OCI-LY7 (cell line): ENCODE measurements at regions of chr5 and their contacts with region 1.

Region 1: GRCh38 chr5:35003018-35003957 is 44.5 kb downstream of the AGXT2 start:
- DNase-seq: peak; percentile 65
- H3K4me3 ChIP-seq: no peak overlapping the region
- H3K27ac ChIP-seq: no peak overlapping the region
- H3K4me1 ChIP-seq: no peaks in the 10 kb centered on the region
- CTCF ChIP-seq: peak; percentile 95

Region 2: DNA sequence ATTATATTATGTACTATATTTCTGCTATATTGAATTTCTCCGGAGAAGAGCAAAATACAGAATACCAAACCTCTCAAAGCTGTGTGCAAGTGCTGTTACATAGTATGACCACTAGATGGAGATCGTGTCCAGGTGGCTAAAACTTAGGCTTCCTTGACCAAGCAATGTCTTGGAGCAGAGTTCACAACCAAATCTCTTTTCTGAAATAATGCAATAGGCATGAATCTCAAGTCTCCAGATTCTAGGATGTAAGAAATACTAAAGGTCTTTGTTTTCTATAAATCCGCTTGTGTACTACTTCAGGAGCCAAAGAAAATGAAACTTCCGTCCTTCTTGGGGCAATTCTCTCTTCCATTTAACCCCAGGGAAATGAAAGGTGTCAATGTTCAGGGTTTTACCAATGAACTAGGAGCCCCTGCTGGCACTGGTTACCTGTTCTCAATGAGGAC is 528.7 kb before region 1 on chr5:
- CTCF ChIA-PET with region 1: no interaction called
- POLR2A ChIA-PET with region 1: no interaction called
- intact Hi-C with region 1: loop called (anchors 5 kb)
- DNase-seq: peak; percentile 49
- H3K4me3 ChIP-seq: no peak overlapping the region
- H3K27ac ChIP-seq: no peak overlapping the region
- H3K4me1 ChIP-seq: no peaks in the 10 kb centered on the region
- CTCF ChIP-seq: peak; percentile 97

Region 3: GRCh38 chr5:34486160-34486848 is 517.0 kb before region 1 on chr5:
- CTCF ChIA-PET with region 1: no interaction called
- POLR2A ChIA-PET with region 1: no interaction called
- intact Hi-C with region 1: loop called (anchors 1 kb)
- DNase-seq: peak; percentile 74
- H3K4me3 ChIP-seq: no peak overlapping the region
- H3K27ac ChIP-seq: no peak overlapping the region
- H3K4me1 ChIP-seq: no peaks in the 10 kb centered on the region
- CTCF ChIP-seq: peak; percentile 97

Region 4: DNA sequence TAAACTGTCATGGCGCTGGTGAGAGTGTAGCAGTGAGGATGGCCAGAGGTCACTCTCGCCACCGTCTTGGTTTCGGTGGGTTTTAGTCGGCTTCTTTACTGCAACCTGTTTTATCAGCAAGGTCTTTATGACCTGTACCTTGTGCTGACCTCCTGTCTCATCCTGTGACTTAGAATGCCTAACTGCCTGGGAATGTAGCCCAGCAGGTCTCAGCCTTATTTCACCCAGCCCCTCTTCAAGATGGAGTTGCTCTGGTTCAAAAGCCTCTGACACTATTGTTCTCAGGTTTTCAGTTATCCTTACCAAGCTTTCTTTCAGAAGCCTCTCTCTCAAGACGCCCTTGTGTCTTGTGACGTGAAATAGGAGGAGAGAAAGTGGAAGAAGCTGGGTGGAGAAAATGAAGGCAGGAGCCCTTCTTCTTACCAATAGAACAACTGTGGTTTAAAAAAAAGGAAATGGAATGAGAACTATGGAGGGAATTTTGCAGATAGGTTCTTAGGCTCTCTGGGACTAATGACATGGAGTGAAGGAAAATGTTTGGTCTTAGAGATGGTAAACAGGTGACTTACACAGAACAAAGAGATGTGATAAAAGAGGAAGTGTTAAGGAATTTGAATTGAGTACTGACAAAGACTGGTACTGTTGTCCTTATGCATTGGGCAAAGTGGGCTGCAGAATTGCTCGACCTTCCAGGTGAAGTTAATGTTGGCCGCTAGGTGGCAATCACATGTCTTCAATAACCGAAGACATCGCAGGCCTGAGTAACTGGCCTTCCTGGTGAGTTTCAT is 480.5 kb before region 1 on chr5:
- CTCF ChIA-PET with region 1: no interaction called
- POLR2A ChIA-PET with region 1: interaction called, 3 read pairs
- intact Hi-C with region 1: loop called (anchors 2 kb)
- DNase-seq: peak; percentile 78
- H3K4me3 ChIP-seq: no peak overlapping the region
- H3K27ac ChIP-seq: no peak overlapping the region
- H3K4me1 ChIP-seq: no peaks in the 10 kb centered on the region
- CTCF ChIP-seq: peak; percentile 85

Region 5: DNA sequence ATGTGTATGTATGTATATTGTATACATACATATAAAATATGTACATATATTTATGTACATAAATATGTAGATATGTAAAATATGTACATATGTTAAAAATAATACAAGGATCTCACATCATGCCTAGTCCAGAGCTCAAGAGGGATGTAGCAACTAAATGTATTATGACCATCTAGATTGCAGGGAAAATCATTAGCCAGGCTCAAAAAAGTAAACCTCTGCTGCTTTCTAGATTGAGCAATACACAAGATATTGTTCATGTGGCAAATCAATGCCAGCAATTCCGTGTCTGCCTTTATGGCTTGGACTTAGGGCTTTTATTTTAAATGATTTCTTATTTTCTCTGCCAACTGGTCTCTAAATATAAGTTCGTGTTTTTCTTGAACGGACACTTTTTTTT is 282.0 kb before region 1 on chr5:
- CTCF ChIA-PET with region 1: no interaction called
- POLR2A ChIA-PET with region 1: no interaction called
- intact Hi-C with region 1: no loop called
- DNase-seq: no peak
- H3K4me3 ChIP-seq: no peak overlapping the region
- H3K27ac ChIP-seq: no peak overlapping the region
- H3K4me1 ChIP-seq: no peaks in the 10 kb centered on the region
- CTCF ChIP-seq: no peak

Region 6: GRCh38 chr5:34743878-34744277 is 259.4 kb before region 1 on chr5:
- CTCF ChIA-PET with region 1: no interaction called
- POLR2A ChIA-PET with region 1: no interaction called
- intact Hi-C with region 1: no loop called
- DNase-seq: no peak
- H3K4me3 ChIP-seq: no peak overlapping the region
- H3K27ac ChIP-seq: no peak overlapping the region
- H3K4me1 ChIP-seq: peaks cover 11% of the 10 kb centered on the region
- CTCF ChIP-seq: no peak

Region 7: GRCh38 chr5:35096216-35096615 is 92.9 kb after region 1 on chr5:
- CTCF ChIA-PET with region 1: no interaction called
- POLR2A ChIA-PET with region 1: no interaction called
- intact Hi-C with region 1: no loop called
- DNase-seq: no peak
- H3K4me3 ChIP-seq: no peak overlapping the region
- H3K27ac ChIP-seq: no peak overlapping the region
- H3K4me1 ChIP-seq: no peaks in the 10 kb centered on the region
- CTCF ChIP-seq: no peak

Region 8: DNA sequence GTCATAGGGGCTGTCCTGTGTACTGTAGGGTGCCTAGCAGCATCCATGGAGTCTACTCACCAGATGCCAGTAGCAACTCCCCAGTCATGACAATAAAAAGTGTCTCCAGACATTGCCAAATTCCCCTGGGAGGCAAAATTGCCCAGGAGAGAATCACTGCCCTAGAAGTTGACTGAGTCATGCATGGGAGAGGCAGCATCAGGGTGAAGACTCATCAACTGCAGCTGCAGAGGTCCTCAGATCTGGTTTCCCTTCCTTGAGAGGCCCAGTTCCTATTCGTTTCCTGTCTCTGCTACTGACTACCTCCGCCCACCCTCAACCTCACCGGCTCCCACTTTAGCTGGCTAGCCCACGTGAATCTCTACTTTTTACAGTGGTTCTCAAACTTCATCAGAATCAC is 133.1 kb after region 1 on chr5:
- CTCF ChIA-PET with region 1: no interaction called
- POLR2A ChIA-PET with region 1: no interaction called
- intact Hi-C with region 1: no loop called
- DNase-seq: no peak
- H3K4me3 ChIP-seq: no peak overlapping the region
- H3K27ac ChIP-seq: no peak overlapping the region
- H3K4me1 ChIP-seq: no peaks in the 10 kb centered on the region
- CTCF ChIP-seq: no peak